Spleen (tissue), 13 donors: ENCODE measurements at regions of chr12 and their contacts with region 1.

Region 1: DNA sequence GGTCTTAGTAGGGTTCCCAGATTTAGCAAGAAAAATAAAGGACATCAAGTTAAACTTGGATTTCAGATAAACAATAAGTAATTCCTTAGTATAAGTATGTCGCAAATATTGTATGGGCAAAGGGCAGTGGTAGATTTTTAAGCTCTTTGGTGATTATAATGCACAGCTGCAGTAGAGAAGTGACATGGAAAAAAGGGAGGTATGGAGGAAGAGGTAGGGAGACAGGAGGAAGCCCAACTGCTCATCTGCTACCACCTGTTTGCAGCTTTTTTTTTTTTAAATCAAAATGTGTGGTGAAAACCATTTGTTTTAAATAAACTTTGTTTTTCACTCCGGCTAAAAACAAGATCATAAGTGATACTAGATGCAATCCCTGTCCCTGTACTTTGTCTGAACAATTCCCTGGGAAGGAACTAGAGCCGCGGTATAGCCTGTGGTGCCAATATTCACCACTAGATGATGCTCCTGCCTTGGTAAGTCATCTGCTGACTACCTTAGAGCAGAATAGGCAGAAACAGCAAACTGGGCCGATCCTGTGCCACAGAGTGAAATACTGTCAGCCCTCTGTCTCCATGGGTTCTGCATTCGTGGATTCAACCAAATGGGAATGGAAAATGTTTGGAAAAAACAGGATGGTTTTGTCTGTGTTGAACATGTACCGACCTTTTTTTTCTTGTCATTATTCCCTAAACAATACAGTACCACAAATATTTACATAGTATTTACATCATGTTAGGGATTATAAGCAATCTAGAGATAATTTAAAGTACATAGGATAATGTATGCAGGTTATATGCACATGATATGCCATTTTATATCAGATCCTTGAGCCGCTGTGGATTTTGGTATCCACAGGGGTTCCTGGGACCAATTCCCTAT is 62.4 kb upstream of the PLBD1 start:
- DNase-seq: peak; percentile 71
- H3K4me3 ChIP-seq: no peak overlapping the region
- H3K27ac ChIP-seq: no peak overlapping the region
- H3K4me1 ChIP-seq: peaks cover 0 to 9% (median 5%) of the 10 kb centered on the region in 6 donors
- H3K27me3 ChIP-seq: no peaks in the 10 kb centered on the region
- CTCF ChIP-seq: peak; percentile 77 to 96 (median 88)
- POLR2A ChIP-seq: no peak

Region 2: DNA sequence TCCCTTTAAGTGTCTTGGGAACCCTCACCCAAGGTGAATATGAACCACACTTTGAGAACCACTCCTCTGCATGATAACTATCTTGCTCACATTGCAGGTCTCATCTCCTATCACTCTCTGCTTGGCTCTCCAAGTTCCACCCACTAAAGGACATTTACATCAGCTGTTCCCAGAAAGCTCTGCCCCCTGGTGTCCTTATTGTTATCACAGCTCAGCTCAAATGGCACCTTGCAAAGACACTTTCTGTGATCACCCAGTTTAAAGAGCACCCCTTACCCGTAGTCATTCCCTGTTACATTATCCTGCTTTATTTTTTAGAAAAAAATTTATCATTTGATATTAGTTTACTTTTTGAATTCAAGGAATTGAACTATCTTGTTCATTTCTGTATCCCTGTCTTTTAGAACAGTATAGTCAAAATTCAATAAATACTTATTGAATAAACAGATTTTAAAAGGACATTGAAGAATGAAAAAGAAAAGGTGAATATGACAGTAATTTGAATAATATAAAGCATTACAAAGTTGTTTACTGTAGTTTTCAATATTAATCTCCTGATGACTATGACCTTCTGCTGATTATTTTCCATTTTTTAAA is 86.9 kb after region 1 on chr12:
- intact Hi-C with region 1: loop called (anchors 10 kb)
- DNase-seq: no peak
- H3K4me3 ChIP-seq: no peak overlapping the region
- H3K27ac ChIP-seq: no peak overlapping the region
- H3K4me1 ChIP-seq: peaks cover 0 to 3% (median 0%) of the 10 kb centered on the region in 6 donors
- H3K27me3 ChIP-seq: no peaks in the 10 kb centered on the region
- CTCF ChIP-seq: peak; percentile 29 to 70 (median 61)
- POLR2A ChIP-seq: no peak